Dendritic cell treated with granulocyte-macrophage colony-stimulating factor and Interleukin-4, amounts not matched to agents 40 ng/mL and 50 ng/mL, for 4 days (primary cell): ENCODE measurements at regions of chr7 and their contacts with region 1.

Region 1: DNA sequence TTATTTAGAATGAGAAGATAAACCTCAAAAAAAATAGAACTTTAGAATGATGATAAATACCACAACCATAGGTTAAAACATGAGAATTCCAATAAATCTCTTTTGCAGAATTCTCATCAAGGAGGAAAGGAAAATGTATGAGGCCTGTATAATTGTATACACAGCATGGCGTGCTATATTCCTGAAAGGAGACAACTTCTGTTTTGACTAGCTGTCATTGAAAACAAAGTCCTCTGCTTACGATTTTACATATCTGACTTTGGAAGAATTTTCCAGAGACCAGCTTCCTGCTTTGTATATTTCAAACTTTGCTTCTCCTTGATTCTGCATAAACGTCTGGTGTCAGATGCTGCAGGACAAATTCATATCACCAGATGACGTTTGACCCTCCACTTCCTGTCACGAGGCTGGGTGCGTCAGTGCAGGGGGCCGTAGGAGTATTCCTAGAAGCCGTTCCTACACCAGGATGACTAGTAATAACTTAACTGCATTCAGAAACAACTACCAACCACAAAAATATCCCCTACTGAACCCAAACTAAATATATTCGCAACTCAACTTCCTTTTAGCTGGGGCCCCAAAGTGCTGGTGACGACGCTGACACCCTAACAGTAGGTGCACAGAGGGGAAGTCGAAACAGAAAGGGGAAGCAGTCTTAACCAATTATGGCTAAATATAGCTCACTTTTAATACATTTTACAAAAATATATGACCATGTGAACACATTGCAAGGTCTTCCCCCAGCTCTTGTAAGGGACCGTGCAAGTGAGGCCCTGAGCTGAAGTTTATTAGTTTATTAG is 178.6 kb upstream of the INHBA start:
- H3K4me3 Mint-ChIP-seq: peak overlapping the region; percentile 59
- H3K27ac Mint-ChIP-seq: peak overlapping the region; percentile 82
- H3K4me1 Mint-ChIP-seq: peaks cover 64% of the 10 kb centered on the region
- H3K27me3 Mint-ChIP-seq: peaks cover 29% of the 10 kb centered on the region

Region 2: GRCh38 chr7:41705109-41705901 is 176.2 kb before region 1 on chr7:
- intact Hi-C with region 1: loop called (anchors 5 kb)
- H3K4me3 Mint-ChIP-seq: peak overlapping the region; percentile 86
- H3K27ac Mint-ChIP-seq: peak overlapping the region; percentile 79
- H3K4me1 Mint-ChIP-seq: peaks cover 47% of the 10 kb centered on the region
- H3K27me3 Mint-ChIP-seq: peaks cover 20% of the 10 kb centered on the region

Region 3: DNA sequence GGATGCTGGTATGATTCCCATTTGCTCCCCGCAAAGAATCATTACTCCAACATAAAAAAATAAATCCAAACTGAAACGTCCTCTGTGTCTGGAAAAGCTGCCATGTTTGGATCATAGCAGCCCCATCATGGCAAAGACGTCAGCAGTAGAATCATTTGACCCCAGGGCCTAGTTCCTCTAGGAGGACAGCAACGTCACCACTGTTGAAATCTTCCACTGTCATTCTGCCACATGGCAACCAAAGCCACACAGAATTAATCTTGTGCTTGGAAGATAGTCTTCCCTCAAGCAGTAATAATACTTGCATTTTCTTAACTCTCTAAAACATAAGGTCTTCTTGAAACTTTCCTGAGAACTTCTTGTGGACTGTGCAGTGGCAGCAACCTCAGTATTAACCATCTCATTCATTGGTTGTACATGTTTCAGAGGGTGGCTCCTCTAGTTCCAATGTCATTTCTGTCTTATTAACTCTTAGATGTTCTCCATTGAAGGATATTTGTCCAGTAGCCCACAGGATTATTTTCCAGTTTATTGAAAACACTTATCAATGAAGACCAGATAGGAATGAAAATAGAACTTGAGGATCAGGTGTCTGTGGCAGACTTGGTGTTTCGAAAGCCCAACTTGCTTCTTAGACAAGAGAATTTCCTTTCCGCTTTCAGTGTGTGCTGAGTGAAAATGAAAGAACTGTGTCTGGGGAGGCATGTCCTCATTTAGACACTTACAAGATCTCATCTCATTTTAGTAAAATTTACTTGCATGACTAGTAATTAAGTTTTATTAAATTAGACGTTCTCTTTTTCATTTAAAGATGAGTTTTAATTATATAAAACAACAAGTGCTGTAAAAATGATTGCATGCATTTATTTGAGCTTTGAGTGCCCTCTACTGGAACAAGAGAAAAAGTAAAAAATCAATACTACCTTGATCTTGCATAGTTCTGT is 149.8 kb before region 1 on chr7:
- intact Hi-C with region 1: loop called (anchors 5 kb)
- H3K4me3 Mint-ChIP-seq: no peak overlapping the region
- H3K27ac Mint-ChIP-seq: peak overlapping the region; percentile 50
- H3K4me1 Mint-ChIP-seq: peaks cover 51% of the 10 kb centered on the region
- H3K27me3 Mint-ChIP-seq: peaks cover 11% of the 10 kb centered on the region

Region 4: GRCh38 chr7:41779918-41780317 is 101.6 kb before region 1 on chr7:
- intact Hi-C with region 1: loop called (anchors 1 kb)
- H3K4me3 Mint-ChIP-seq: peak overlapping the region; percentile 21
- H3K27ac Mint-ChIP-seq: peak overlapping the region; percentile 68
- H3K4me1 Mint-ChIP-seq: peaks cover 41% of the 10 kb centered on the region
- H3K27me3 Mint-ChIP-seq: no peaks in the 10 kb centered on the region

Region 5: DNA sequence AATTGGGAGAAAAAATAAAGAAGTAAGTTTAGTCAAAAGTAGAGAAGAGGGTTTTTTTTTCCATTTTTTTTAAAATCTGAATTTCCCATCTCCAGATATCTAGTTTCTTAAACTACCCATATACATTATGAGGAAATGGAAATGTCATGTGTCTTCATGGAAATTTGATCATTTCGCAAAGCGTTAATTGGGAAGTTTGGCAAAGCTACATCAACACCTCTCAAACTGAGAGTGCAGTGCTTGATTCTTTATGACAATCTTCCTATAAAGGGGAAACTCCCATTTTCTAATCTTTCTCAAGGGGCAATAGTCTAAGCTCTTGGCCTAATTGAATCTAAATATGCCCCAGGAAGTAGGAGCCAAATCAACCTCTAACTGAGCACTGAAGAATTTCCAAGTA is 68.2 kb before region 1 on chr7:
- intact Hi-C with region 1: loop called (anchors 1 kb)
- H3K4me3 Mint-ChIP-seq: no peak overlapping the region
- H3K27ac Mint-ChIP-seq: peak overlapping the region; percentile 39
- H3K4me1 Mint-ChIP-seq: peaks cover 57% of the 10 kb centered on the region
- H3K27me3 Mint-ChIP-seq: peaks cover 11% of the 10 kb centered on the region

Region 6: DNA sequence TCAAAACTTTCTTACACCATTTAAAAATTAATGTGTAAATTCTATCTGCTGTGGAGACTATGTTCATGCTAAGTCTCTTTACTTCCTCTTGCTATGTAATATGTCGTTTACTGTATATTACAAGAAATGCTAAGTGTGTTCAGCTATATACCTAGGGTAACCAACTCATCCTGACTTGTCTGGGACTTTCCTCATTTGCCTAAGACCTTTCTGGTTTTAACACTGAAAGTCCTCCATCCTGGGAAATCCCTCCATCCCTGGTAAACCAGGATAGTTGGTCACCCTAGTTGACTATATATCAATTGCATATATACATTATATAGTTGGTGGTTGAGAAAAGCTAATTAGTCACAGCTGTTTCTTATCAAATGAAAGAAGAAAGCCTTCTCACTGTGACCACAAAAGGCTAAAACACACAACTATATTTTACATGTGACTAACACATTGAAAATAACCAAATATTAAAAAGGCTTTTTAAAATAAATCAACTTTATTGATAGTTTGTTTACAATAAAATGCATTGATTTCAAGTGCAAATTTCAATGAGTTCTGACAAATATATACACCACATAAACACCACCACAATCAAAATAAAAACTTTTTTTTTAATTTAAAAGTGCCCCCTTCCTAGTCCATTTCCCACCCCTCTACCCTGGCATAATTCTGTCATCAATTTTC is 10.9 kb before region 1 on chr7:
- intact Hi-C with region 1: loop called (anchors 1 kb)
- H3K4me3 Mint-ChIP-seq: no peak overlapping the region
- H3K27ac Mint-ChIP-seq: peak overlapping the region; percentile 87
- H3K4me1 Mint-ChIP-seq: peaks cover 37% of the 10 kb centered on the region
- H3K27me3 Mint-ChIP-seq: peaks cover 3% of the 10 kb centered on the region

Region 7: DNA sequence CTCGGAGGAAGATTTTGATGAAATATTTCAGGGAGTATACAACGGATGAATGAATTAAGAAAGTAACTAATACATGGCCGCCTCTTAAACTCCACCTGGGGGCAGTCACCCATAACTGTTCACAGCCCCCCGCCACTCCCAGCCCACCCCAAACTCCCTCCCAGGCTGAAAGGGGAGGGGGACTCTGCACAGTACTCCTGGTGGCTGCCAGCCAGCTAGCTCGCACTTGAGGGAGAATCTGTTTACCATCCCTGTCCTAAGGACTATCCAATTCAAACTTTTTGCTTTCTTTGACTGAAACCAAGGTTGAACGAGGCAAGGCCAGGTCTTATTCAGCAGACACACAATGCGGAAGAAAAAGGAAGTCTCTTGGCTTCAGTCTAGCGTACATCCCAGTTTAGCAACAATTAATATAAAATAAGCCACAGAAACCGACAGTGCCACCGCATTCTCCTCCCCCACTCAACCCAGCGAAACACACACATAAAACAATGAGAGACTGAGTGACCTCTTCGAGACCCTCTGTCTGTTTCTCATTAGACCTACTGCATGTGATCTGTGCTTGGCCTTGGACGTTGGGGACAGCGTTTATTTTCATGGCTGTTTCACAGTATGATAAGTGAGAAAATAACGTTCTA is 135.9 kb after region 1 on chr7:
- intact Hi-C with region 1: no loop called
- H3K4me3 Mint-ChIP-seq: no peak overlapping the region
- H3K27ac Mint-ChIP-seq: no peak overlapping the region
- H3K4me1 Mint-ChIP-seq: no peaks in the 10 kb centered on the region
- H3K27me3 Mint-ChIP-seq: peaks cover 6% of the 10 kb centered on the region